Activated CD4-positive, alpha-beta T cell treated with anti-CD3 and anti-CD28 coated beads for 36 hours (primary cell): ENCODE measurements at regions of chr12 and their contacts with region 1.

Region 1: GRCh38 chr12:121015825-121016766 is at the start of gene C12orf43:
- DNase-seq: peak; percentile 97
- ATAC-seq: peak; percentile 99
- H3K4me3 Mint-ChIP-seq: peak within 1 kb of the TSS; percentile 91
- H3K27ac Mint-ChIP-seq: peak within 1 kb of the TSS; percentile 92
- H3K4me1 Mint-ChIP-seq: peaks cover 16% of the 10 kb centered on the region
- H3K27me3 Mint-ChIP-seq: no peaks in the 10 kb centered on the region
- total RNA-seq, gene C12orf43: 22.8 to 23.8 TPM

Region 2: DNA sequence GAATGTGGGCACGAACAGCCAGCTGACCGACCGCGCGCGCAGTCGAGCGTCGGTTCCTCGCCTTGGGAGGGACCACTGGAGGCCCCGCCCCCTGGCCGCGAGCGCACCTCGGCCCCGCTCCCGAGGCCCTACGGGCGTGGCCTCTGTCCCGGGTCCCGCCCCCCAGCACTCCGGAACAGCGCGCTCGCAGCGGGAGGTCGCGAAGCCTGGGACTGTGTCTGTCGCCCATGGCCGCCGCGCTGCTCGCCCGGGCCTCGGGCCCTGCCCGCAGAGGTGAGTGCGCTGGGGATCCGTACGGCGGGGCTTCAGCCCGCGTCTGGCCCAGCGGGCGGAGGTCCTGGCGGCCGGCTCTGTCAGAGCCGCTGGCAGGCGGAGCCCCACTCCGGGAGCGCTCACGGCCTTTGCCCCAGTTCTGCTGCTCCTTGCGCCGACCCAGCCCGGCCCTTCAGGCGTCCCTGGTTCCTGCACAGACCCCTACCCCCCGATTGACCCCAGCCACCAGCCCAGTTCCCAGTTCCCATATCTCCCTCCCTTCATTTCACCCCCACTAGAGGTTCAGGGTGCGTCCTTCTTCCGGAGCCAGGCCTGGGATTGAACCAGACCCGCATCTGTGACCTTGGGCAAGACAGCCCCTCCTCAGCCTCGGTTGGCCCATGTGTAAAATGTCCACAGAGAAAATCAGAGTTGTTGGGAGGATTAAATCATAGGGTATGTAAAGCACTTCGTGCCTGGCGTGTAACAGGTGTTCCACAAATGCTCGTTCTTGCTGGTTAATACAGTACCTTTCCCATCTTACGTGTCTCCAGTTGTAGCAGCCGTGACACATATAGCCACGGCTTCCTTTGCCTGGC is 290.2 kb before region 1 on chr12 and contains the start of gene ACADS:
- CTCF ChIA-PET with region 1: no interaction called
- POLR2A ChIA-PET with region 1: no interaction called
- intact Hi-C with region 1: loop called in 1 of 2 experiments (anchors 1 kb)
- DNase-seq: peak; percentile 96
- ATAC-seq: peak; percentile 100
- H3K4me3 Mint-ChIP-seq: peak within 1 kb of the TSS; percentile 78
- H3K27ac Mint-ChIP-seq: peak within 1 kb of the TSS; percentile 64
- H3K4me1 Mint-ChIP-seq: peaks cover 17% of the 10 kb centered on the region
- H3K27me3 Mint-ChIP-seq: no peaks in the 10 kb centered on the region
- total RNA-seq, gene ACADS: 10.1 to 17.4 TPM

Region 3: GRCh38 chr12:121038861-121039666 is 23.0 kb after region 1 on chr12 and contains the start of gene OASL:
- CTCF ChIA-PET with region 1: interaction called, 3 read pairs
- POLR2A ChIA-PET with region 1: no interaction called
- intact Hi-C with region 1: loop called (anchors 1 kb)
- DNase-seq: peak; percentile 72
- ATAC-seq: peak; percentile 58
- H3K4me3 Mint-ChIP-seq: peak within 1 kb of the TSS; percentile 78
- H3K27ac Mint-ChIP-seq: peak within 1 kb of the TSS; percentile 91
- H3K4me1 Mint-ChIP-seq: peaks cover 52% of the 10 kb centered on the region
- H3K27me3 Mint-ChIP-seq: peaks cover 14% of the 10 kb centered on the region
- total RNA-seq, gene OASL: 13.9 to 19.6 TPM

Region 4: GRCh38 chr12:121128970-121129810 is 113.1 kb after region 1 on chr12:
- CTCF ChIA-PET with region 1: no interaction called
- POLR2A ChIA-PET with region 1: no interaction called
- intact Hi-C with region 1: loop called in 1 of 2 experiments (anchors 1 kb)
- DNase-seq: peak; percentile 90
- ATAC-seq: peak; percentile 83
- H3K4me3 Mint-ChIP-seq: peak overlapping the region; percentile 63
- H3K27ac Mint-ChIP-seq: peak overlapping the region; percentile 98
- H3K4me1 Mint-ChIP-seq: peaks cover 68% of the 10 kb centered on the region
- H3K27me3 Mint-ChIP-seq: no peaks in the 10 kb centered on the region

Region 5: GRCh38 chr12:121181181-121181580 is 165.1 kb after region 1 on chr12:
- CTCF ChIA-PET with region 1: no interaction called
- POLR2A ChIA-PET with region 1: no interaction called
- intact Hi-C with region 1: no loop called
- DNase-seq: no peak
- ATAC-seq: no peak
- H3K4me3 Mint-ChIP-seq: no peak overlapping the region
- H3K27ac Mint-ChIP-seq: no peak overlapping the region
- H3K4me1 Mint-ChIP-seq: peaks cover 5% of the 10 kb centered on the region
- H3K27me3 Mint-ChIP-seq: no peaks in the 10 kb centered on the region

Region 6: DNA sequence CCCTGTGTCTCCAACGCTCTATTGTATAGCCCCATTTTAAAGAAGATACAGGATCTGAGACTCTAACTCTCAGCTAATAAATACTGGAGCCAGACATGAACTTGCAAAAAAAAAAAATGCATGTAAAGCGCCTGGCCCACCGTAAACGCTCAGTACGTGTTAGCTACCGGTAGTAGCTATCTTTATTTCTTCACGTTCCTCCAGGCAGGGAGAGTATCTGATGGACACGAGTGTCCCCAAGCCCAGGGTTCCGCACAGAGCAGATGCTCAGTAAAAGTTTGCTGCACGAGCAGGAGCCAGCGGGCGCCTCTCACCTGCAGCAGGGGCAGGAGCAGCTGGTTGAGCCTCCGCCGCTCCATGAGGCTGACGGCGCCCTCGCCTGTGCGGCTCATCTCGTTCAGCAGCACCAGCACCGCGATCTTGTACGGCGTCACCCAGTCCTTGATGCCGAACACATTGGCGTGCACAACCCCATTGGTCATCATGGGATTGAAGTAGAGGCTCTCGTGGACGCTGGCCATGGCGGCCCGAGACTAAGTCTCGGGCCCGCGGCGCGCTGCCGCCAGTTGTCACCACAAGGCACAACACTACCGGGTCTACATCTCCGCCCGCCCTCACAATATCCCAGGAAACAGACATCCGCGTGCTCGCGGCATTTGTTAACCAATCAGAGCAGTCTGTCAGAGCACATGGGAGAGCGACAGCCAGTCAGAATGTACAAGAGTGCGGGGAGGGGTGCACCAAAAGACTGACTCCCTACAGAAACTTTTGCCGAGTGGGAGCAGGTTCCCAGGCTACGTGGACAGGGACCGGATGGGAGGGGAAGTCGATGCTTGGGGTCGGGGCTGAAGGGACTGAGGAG is 336.0 kb after region 1 on chr12 and contains the start of gene ANAPC5:
- CTCF ChIA-PET with region 1: no interaction called
- POLR2A ChIA-PET with region 1: no interaction called
- intact Hi-C with region 1: loop called in 1 of 2 experiments (anchors 2 kb)
- DNase-seq: peak; percentile 94
- ATAC-seq: peak; percentile 99
- H3K4me3 Mint-ChIP-seq: peak within 1 kb of the TSS; percentile 92
- H3K27ac Mint-ChIP-seq: peak within 1 kb of the TSS; percentile 97
- H3K4me1 Mint-ChIP-seq: peaks cover 24% of the 10 kb centered on the region
- H3K27me3 Mint-ChIP-seq: peaks cover under 1% of the 10 kb centered on the region
- total RNA-seq, gene ANAPC5: 113 to 118 TPM